ENCODE measurements at regions of chr12 and their contacts with region 1.

Region 1: GRCh38 chr12:127925971-127926370 is 341.0 kb upstream of the TMEM132C start:
- DNase-seq: peak; percentile 52 to 64
- H3K4me3 ChIP-seq: no peak overlapping the region
- H3K27ac ChIP-seq: no peak overlapping the region
- H3K4me1 ChIP-seq: no peaks in the 10 kb centered on the region
- H3K27me3 ChIP-seq: no peaks in the 10 kb centered on the region
- CTCF ChIP-seq: peak; percentile 36 to 73 (median 45)
- POLR2A ChIP-seq: no peak

Region 2: GRCh38 chr12:127677537-127678131 is 248.3 kb before region 1 on chr12:
- intact Hi-C with region 1: loop called (anchors 10 kb)
- DNase-seq: peak; percentile 67 to 71
- H3K4me3 ChIP-seq: no peak overlapping the region
- H3K27ac ChIP-seq: no peak overlapping the region
- H3K4me1 ChIP-seq: no peaks in the 10 kb centered on the region
- H3K27me3 ChIP-seq: no peaks in the 10 kb centered on the region
- CTCF ChIP-seq: peak; percentile 42 to 79 (median 54)
- POLR2A ChIP-seq: no peak

Region 3: GRCh38 chr12:127767656-127768055 is 158.3 kb before region 1 on chr12:
- intact Hi-C with region 1: loop called (anchors 5 kb)
- DNase-seq: no peak
- H3K4me3 ChIP-seq: no peak overlapping the region
- H3K27ac ChIP-seq: no peak overlapping the region
- H3K4me1 ChIP-seq: no peaks in the 10 kb centered on the region
- H3K27me3 ChIP-seq: no peaks in the 10 kb centered on the region
- CTCF ChIP-seq: no peak
- POLR2A ChIP-seq: no peak

Region 4: GRCh38 chr12:127987199-127987901 is 61.4 kb after region 1 on chr12:
- intact Hi-C with region 1: no loop called
- DNase-seq: no peak
- H3K4me3 ChIP-seq: no peak overlapping the region
- H3K27ac ChIP-seq: no peak overlapping the region
- H3K4me1 ChIP-seq: no peaks in the 10 kb centered on the region
- H3K27me3 ChIP-seq: no peaks in the 10 kb centered on the region
- CTCF ChIP-seq: no peak
- POLR2A ChIP-seq: no peak